ENCODE measurements at regions of chr11 and their contacts with region 1.

Region 1: DNA sequence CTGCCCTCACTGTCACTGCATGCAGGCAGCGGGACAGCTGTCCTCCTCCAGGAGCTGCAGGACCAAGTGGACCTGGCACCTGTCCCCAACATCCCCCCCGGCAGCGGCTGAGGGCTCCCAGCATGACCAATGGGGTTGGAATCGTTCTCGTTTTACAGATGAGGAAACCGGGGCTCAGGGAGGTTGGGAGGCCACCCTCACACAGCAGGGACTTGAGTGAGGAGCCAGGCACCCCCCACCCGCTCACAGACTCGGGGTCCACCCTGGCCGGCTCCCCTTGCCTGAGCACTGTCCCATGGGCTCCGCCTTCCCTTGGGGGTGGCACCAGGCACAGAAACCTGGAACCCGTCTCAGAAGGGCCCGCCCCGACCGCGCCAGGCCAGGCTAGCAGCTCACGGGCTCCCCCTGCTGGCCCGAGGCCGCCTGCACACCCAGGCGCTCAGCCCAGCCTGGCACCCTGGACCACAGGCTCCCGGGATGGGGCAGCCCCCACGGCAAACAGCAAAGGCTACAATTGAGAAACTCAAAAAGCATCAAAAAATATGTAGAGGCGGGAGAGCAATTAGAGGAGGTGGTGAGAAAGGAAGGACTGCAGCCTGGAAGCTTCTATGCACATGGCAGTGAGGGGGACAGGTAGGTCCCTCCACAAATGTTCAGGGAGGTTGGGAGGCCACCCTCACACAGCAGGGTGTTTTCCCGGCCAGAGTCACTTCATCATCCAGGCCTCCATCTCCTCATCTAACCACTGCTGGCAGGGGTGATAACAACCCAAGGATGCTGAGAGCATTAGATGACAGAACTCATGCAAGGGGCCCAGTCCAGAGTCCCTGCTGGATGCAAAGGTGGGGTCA is 12.8 kb downstream of the MACROD1 start:
- DNase-seq: peak; percentile 62 to 66
- H3K4me3 ChIP-seq: no peak overlapping the region
- H3K27ac ChIP-seq: no peak overlapping the region
- H3K4me1 ChIP-seq: peaks cover 26 to 33% of the 10 kb centered on the region in 2 donors
- H3K27me3 ChIP-seq: no peaks in the 10 kb centered on the region
- CTCF ChIP-seq: peak; percentile 83 to 100 (median 98)
- POLR2A ChIP-seq: no peak

Region 2: DNA sequence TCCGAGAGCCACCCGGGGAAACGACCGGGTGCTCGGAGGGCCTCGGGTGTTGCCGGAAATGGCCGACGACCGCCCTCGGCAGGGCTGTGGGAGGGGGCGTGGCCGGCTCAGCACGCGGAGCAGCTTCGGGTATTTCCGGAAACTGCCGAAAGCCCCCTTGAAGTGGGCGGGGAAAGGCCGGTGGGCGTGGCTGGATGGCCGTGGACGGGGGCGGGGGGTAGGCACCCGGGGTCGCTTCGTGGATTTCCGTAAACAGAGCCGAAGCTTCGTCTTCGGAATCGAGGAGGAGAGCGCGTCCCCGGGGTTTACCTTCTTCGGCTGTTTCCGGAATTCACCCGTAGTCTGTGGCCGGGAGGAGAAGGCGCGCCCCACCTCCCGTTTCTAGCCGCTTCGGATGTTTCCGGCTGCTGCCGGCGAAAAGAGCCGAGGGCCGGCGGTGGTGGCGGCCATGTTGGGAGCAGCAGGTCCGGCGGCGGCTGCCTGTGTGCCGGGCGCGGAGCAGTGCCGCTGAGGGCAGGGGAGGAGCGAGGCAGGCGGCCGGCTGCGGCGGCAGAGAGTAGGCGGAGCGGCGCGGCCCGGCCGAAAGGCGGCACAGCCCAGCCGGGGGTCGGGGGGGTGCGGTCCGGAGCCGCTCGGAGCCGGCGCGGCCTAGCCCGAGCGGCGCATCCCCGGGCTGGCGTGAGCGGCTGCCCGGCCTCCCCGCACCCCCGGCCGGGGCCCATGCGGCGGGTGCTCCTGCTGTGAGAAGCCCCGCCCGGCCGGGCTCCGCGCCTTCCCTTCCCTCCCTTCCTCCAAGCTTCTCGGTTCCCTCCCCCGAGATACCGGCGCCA is 314.2 kb before region 1 on chr11 and contains the start of gene MARK2:
- intact Hi-C with region 1: loop called (anchors 5 kb)
- DNase-seq: peak; percentile 98
- H3K4me3 ChIP-seq: peak within 1 kb of the TSS; percentile 45 to 87 (median 71)
- H3K27ac ChIP-seq: peak within 1 kb of the TSS; percentile 84 to 92 (median 88)
- H3K4me1 ChIP-seq: peaks cover 47 to 48% of the 10 kb centered on the region in 2 donors
- H3K27me3 ChIP-seq: no peaks in the 10 kb centered on the region
- CTCF ChIP-seq: no peak
- POLR2A ChIP-seq: peak; percentile 26 to 89
- total RNA-seq, gene MARK2: 28.2 to 57.7 (median 48.6) TPM

Region 3: DNA sequence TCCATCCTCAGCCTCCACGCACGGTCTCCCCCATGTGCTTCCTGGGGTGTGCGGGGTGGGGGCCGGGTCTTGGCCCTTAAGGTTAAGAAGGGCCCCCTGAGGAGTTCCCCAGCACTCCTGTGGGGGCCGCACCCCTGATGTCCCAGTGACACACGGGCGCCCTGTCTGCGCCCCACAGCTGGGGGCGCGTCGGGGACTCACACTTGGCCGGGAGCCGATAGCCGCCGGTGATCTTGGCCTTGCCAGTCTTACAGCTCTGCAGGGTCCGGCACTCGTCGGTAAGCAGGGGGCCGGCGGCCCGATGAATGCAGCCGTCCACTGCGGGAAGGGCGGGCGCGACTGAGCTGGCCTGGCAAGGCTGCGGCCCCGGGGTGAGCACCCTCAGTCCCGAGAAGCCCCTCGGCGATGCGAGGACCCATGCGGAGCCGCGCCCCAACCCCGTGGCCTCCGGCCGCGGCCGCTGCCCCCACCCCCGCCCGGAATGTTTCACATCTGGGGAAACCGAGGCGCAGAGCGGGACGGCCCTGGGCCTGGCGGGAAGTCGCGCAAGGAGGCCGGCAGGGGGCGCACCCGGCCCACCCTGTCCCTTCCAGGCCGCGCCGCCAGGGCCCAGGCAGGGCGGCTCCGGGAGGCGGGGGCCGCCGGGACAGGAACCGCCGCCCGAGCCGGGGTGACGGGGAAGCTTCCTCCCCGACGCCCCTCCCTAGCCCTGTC is 152.9 kb before region 1 on chr11:
- intact Hi-C with region 1: loop called (anchors 2 kb)
- DNase-seq: peak; percentile 70 to 73
- H3K4me3 ChIP-seq: peak overlapping the region in 1 of 3 donors; percentile 6
- H3K27ac ChIP-seq: no peak overlapping the region
- H3K4me1 ChIP-seq: peaks cover 18 to 38% of the 10 kb centered on the region in 2 donors
- H3K27me3 ChIP-seq: no peaks in the 10 kb centered on the region
- CTCF ChIP-seq: peak; percentile 24 to 94 (median 86)
- POLR2A ChIP-seq: no peak

Region 4: GRCh38 chr11:64088162-64089026 is 64.7 kb before region 1 on chr11:
- intact Hi-C with region 1: loop called (anchors 5 kb)
- DNase-seq: peak; percentile 58 to 60
- H3K4me3 ChIP-seq: no peak overlapping the region
- H3K27ac ChIP-seq: peak overlapping the region; percentile 63 to 82 (median 81)
- H3K4me1 ChIP-seq: peaks cover 29 to 59% of the 10 kb centered on the region in 2 donors
- H3K27me3 ChIP-seq: no peaks in the 10 kb centered on the region
- CTCF ChIP-seq: peak in 4 of 6 experiments; percentile 23 to 69 (median 62)
- POLR2A ChIP-seq: no peak

Region 5: DNA sequence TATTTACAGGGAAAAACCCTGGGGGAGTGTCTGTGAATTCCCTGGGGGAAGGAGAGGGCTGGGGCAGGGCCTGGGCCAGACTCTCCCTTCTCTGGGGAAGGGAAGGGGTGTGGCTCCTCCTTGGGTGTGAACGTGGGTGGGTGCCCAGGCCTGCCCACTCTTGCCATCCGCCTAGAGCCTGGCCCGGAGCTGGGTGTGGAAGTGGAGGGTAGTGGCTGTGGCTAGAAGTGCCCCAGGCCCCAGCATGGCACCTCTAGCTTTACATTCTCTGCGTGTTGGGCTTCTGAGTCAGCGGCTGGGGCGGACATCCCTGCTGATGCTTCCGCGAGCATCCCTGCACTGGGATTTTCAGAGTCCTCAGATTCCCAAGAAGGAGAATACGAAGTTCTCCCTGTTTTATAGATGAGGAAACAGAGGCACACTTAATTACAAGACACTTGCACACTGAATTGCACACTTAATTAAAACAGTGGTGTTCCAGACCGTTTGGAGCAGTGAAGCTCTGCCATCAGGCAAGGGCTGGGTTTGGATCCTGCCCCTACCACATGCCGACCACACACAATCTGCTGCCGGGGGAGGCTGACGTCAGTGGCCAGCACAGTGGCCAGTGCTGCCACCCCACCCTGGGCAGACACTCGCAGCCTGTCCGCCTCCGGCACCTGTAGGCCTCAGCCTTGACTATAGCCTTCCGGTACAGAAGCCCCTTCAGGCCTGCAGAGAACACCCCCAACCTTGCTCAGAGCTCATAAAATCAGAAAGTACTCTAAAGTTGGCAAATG is 123.8 kb after region 1 on chr11:
- intact Hi-C with region 1: no loop called
- DNase-seq: no peak
- H3K4me3 ChIP-seq: no peak overlapping the region
- H3K27ac ChIP-seq: no peak overlapping the region
- H3K4me1 ChIP-seq: peaks cover 2 to 3% of the 10 kb centered on the region in 2 donors
- H3K27me3 ChIP-seq: no peaks in the 10 kb centered on the region
- CTCF ChIP-seq: no peak
- POLR2A ChIP-seq: no peak